ENCODE measurements at regions of chr2 and their contacts with region 1.

Region 1: GRCh38 chr2:237702441-237703391 is 75.3 kb downstream of the LRRFIP1 start:
- DNase-seq: peak; percentile 65
- H3K4me3 ChIP-seq: peak overlapping the region; percentile 7
- H3K27ac ChIP-seq: peak overlapping the region; percentile 93
- H3K4me1 ChIP-seq: peaks cover 63% of the 10 kb centered on the region
- H3K27me3 ChIP-seq: no peaks in the 10 kb centered on the region
- CTCF ChIP-seq: no peak

Region 2: DNA sequence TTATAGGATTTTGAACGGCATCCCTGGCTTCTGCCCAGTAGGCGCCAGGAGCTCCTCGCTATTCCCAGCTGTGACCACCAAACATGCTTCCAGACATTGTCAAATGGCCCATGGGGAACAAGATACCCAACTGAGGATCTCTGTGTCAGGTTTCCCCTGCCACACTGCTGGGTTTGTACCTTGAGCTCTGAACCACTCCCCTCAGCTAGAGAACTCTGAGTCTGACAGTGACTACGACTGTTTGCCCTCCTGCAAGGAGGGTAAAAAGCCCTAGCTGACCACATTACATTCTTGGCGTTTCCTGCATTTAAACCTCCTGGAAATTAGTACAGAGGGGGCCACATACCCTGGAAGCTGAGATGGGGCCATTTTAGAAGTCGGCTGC is 62.9 kb before region 1 on chr2:
- CTCF ChIA-PET with region 1: no interaction called
- POLR2A ChIA-PET with region 1: no interaction called
- intact Hi-C with region 1: no loop called
- DNase-seq: no peak
- H3K4me3 ChIP-seq: no peak overlapping the region
- H3K27ac ChIP-seq: no peak overlapping the region
- H3K4me1 ChIP-seq: no peaks in the 10 kb centered on the region
- H3K27me3 ChIP-seq: no peaks in the 10 kb centered on the region
- CTCF ChIP-seq: no peak

Region 3: DNA sequence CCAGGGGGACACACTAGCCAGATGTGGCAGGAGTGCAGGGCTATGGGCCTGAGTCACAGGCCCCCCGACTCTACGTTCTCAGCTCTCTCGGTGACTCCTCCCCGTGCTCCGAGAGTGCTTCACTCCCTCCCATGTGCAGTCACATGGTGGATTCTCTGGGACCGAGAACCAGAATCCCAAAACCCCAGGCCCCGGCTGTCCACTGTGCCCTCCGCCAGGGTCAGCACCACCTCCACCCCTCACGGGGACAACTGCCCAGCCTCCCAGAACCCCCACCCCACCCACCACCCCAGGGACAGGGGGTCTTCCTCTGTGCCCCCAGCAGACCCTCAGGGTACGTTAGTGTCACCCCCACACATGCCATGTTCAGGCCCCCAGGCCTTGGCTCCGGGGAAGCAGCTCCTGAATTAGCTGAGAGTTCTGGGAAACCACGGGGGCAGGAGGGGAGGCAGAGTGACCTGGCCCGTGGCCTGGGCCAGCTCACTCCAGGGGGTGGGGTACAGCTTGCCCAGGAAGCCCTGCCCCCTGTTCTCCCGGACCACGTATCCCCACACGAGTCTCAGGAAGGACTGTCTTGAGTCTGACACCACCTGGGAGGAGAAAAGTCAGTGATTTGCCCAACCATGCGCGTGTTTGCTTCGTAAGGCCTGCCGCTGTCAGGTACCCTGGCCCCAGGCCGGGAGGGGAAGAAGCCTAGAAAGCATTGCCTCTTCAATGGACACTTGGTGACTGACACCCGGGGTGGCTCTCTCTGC is 161.2 kb after region 1 on chr2:
- CTCF ChIA-PET with region 1: no interaction called
- POLR2A ChIA-PET with region 1: interaction called, 16 read pairs
- intact Hi-C with region 1: no loop called
- DNase-seq: no peak
- H3K4me3 ChIP-seq: no peak overlapping the region
- H3K27ac ChIP-seq: no peak overlapping the region
- H3K4me1 ChIP-seq: peaks cover 7% of the 10 kb centered on the region
- H3K27me3 ChIP-seq: no peaks in the 10 kb centered on the region
- CTCF ChIP-seq: no peak